ENCODE measurements at regions of chr3 and their contacts with region 1.

Region 1: GRCh38 chr3:127970966-127971592 is 56.0 kb downstream of the KBTBD12 start:
- DNase-seq: peak; percentile 45 to 49
- H3K4me3 ChIP-seq: no peak overlapping the region
- H3K4me1 ChIP-seq: no peaks in the 10 kb centered on the region
- H3K27me3 ChIP-seq: peaks cover 34% of the 10 kb centered on the region

Region 2: DNA sequence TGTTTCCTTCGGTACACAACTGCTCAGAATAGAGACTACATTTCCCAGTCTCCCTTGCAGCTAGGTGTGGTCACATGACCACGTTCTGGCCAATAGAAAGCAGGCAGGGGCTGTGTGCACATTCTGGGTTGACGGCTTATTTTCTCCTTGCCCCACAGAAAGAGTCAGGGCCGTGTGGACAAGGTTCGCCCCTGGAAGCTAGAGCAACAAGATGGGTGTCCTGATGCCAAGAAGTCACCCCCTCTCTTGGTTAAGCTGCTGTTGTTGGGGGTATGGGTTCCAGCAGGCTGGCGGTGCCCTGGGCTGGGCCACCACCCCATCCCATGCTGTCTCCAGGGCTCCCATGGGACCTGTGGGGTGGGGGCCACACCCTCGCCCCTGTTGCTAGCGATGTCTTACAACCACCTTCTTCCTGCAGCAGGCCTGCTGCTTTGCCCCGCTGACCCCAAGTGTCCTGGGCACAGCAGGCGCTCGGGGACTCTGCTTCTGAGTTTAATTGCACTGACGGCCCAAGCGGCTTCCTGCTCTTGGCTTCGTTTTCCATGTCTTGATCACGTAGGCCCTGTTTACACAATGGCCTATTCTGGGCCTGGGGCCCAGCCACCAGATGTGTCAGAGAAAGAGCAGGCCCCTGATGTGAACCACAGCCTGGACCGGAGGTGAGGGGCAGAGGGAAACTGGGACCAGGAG is 273.4 kb before region 1 on chr3:
- in situ Hi-C with region 1: loop called (anchors 25 kb)
- DNase-seq: peak; percentile 69 to 84
- H3K4me3 ChIP-seq: no peak overlapping the region
- H3K4me1 ChIP-seq: peaks cover 3% of the 10 kb centered on the region; the same call in 1 of the 2 replicates
- H3K27me3 ChIP-seq: no peaks in the 10 kb centered on the region